ENCODE measurements at regions of chr15 and their contacts with region 1.

Region 1: DNA sequence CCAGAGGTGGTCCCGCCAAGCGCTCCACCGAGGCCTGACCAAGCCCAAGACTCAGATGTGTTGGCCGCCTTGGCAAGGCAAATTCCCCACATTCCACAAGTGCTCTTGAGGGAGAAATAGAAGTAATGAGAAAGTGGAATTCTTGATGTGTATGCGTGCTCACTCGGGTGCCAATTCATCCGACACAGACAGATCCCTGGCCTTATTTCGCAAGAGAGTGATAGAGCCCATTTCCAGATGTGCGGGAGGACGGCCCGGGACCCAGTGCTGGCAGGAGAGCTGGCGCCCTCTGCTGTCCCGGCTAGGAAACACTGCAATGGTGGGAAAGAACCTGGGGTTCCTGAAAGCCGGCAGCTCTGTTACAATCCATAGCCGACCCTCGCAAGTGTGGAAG is 76.0 kb downstream of the HMG20A start:
- DNase-seq: peak in 1 of 2 donors; percentile 92
- H3K4me3 ChIP-seq: peak overlapping the region in 1 of 2 donors; percentile 5
- H3K27ac ChIP-seq: peak overlapping the region; percentile 79
- H3K4me1 ChIP-seq: peaks cover 59% of the 10 kb centered on the region
- H3K27me3 ChIP-seq: no peaks in the 10 kb centered on the region
- CTCF ChIP-seq: peak; percentile 70 to 91 (median 90)
- POLR2A ChIP-seq: no peak

Region 2: DNA sequence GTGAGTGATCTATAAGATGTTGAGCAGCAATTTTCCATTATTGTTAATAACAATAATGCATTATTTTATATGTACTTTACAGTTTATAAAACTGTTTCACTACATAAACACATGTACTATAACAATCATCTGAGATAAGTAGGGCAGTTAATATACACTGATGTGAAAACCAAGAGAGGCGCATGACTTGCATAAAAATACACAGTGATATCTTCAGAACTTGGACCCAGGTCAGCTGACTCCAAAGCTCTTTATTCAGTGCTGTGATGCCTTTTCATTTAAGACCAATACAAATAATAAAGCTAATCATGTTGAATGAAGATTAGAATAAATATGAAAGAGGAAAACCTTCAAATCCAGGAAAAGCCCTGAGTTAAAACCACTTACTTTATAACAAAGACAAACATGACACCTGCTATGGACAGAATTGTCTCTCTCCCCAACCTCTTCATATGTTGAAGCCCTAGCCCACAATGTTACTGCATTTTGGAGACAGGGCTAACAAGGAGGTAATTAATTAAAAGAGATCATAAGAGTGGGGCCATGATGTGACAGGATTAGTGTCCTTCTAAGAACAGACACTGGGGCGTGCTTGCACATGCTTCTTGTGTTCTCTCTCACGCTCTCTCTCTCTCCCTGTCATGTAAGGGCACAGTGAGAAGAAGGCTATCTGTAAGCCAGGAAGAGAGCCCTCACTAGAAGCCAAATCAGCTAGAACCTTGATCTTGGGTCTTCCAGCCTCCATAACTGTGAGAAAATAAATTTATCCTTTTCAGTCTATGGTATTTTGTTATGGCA is 370.0 kb before region 1 on chr15:
- intact Hi-C with region 1: loop called (anchors 10 kb)
- DNase-seq: no peak
- H3K4me3 ChIP-seq: no peak overlapping the region
- H3K27ac ChIP-seq: no peak overlapping the region
- H3K4me1 ChIP-seq: peaks cover 15% of the 10 kb centered on the region
- H3K27me3 ChIP-seq: no peaks in the 10 kb centered on the region
- CTCF ChIP-seq: no peak
- POLR2A ChIP-seq: no peak

Region 3: DNA sequence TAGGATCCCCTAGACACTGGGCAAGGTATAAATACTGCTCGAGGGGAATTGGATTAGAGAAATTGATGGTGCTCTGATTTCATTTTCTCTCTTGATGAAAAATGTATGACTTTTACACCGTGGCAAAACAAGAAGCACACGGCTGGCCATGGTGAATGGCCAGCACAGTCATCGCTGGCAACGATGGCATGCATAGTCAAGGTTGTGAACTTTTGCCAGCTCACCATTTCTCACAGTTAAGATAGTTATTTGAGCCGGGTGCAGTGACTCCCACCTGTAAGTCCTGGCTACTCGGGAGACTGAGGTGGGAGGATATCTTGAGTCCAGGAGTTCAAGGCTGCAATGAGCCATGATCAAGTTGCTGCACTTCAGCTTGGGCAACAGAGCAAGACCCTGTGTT is 19.4 kb after region 1 on chr15:
- intact Hi-C with region 1: loop called (anchors 2 kb)
- DNase-seq: no peak
- H3K4me3 ChIP-seq: no peak overlapping the region
- H3K27ac ChIP-seq: no peak overlapping the region
- H3K4me1 ChIP-seq: no peaks in the 10 kb centered on the region
- H3K27me3 ChIP-seq: no peaks in the 10 kb centered on the region
- CTCF ChIP-seq: no peak
- POLR2A ChIP-seq: no peak